ENCODE measurements at regions of chr12 and their contacts with region 1.

Region 1: GRCh38 chr12:124036674-124037109 is 63.7 kb downstream of the ZNF664 start:
- DNase-seq: peak; percentile 21
- ATAC-seq: peak; percentile 54
- H3K4me3 Mint-ChIP-seq: no peak overlapping the region
- H3K27ac Mint-ChIP-seq: no peak overlapping the region
- H3K4me1 Mint-ChIP-seq: no peaks in the 10 kb centered on the region
- H3K27me3 Mint-ChIP-seq: peaks cover 5% of the 10 kb centered on the region
- CTCF ChIP-seq: peak; percentile 96

Region 2: GRCh38 chr12:123801573-123802178 is 235.0 kb before region 1 on chr12:
- CTCF ChIA-PET with region 1: no interaction called
- POLR2A ChIA-PET with region 1: no interaction called
- intact Hi-C with region 1: loop called (anchors 1 kb)
- DNase-seq: no peak
- ATAC-seq: no peak
- H3K4me3 Mint-ChIP-seq: no peak overlapping the region
- H3K27ac Mint-ChIP-seq: no peak overlapping the region
- H3K4me1 Mint-ChIP-seq: no peaks in the 10 kb centered on the region
- H3K27me3 Mint-ChIP-seq: no peaks in the 10 kb centered on the region
- CTCF ChIP-seq: no peak

Region 3: GRCh38 chr12:123934886-123935285 is 101.8 kb before region 1 on chr12:
- CTCF ChIA-PET with region 1: no interaction called
- POLR2A ChIA-PET with region 1: no interaction called
- intact Hi-C with region 1: no loop called
- DNase-seq: no peak
- ATAC-seq: no peak
- H3K4me3 Mint-ChIP-seq: no peak overlapping the region
- H3K27ac Mint-ChIP-seq: no peak overlapping the region
- H3K4me1 Mint-ChIP-seq: peaks cover 24% of the 10 kb centered on the region
- H3K27me3 Mint-ChIP-seq: no peaks in the 10 kb centered on the region
- CTCF ChIP-seq: no peak

Region 4: DNA sequence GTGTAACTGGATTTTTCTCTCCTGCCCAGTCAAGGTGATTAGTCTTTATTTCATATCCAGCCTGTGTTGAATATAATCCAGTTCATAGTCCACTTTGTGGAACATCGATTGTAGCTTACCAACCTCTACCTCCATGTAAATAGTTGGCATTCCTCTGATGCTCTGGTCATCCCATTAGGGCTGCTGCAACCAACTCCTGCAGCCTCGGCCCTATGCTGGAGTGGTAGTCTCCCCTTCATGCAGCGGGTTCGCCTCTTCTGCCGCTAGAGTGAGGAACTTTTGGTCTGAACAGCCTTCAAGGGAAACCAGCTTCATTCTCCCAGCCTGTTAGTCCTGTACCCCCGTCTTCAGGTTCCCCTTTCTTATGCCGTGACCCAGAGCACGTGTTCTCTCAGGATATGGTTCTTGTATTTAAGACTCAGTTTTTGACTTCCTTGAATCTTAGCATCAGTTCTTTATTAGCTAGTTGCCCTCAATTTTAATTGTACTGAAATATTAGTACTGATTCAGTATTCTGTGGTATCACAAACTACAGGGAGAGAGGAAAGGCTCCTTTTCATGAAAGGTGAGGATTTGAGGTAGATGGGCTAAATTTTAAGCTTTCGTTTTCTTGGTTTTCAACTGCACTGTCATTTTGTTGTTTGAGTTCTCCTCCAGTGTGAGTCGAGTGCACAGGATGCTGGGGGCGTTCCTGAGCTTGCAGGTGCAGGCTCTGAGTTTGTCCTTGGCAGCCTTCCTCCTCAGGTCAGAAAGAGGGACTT is 30.4 kb before region 1 on chr12:
- CTCF ChIA-PET with region 1: interaction called, 10 read pairs
- POLR2A ChIA-PET with region 1: no interaction called
- intact Hi-C with region 1: no loop called
- DNase-seq: no peak
- ATAC-seq: peak; percentile 73
- H3K4me3 Mint-ChIP-seq: peak overlapping the region; percentile 46
- H3K27ac Mint-ChIP-seq: peak overlapping the region; percentile 77
- H3K4me1 Mint-ChIP-seq: peaks cover 30% of the 10 kb centered on the region
- H3K27me3 Mint-ChIP-seq: no peaks in the 10 kb centered on the region
- CTCF ChIP-seq: no peak

Region 5: GRCh38 chr12:124680863-124681778 is 644.4 kb after region 1 on chr12:
- CTCF ChIA-PET with region 1: no interaction called
- POLR2A ChIA-PET with region 1: no interaction called
- intact Hi-C with region 1: loop called (anchors 5 kb)
- DNase-seq: peak; percentile 26
- ATAC-seq: peak; percentile 96
- H3K4me3 Mint-ChIP-seq: no peak overlapping the region
- H3K27ac Mint-ChIP-seq: no peak overlapping the region
- H3K4me1 Mint-ChIP-seq: peaks cover 14% of the 10 kb centered on the region
- H3K27me3 Mint-ChIP-seq: peaks cover 6% of the 10 kb centered on the region
- CTCF ChIP-seq: no peak

Region 6: DNA sequence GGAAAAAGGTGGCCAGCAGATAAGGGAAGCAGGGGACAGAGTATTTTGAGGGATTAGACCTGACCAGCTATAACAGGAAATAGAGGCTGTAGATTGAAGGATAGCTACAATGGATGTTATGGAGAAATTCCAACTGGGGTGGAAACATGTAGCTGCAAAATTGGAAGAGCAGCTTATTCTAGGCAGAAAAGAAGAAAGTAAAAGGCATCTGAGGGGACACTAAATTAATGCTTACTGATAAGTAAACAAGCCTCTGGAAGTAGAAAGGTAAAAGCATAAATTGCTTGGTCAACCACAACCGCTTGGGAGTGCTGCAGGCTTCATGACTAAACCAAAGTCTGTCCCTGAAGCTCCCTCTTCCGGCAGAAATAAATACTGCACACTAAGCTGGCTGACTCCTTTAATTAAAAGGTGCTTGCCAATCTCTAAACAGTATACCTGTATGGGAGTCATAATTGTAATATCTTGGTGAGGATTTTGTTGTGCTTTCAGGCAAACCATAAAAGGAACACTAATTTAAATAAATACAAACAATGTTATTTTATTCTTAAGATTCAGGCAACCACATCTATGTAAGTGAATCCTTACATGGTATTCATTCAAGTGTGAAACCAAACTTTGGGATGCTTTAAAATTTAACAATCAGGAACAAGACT is 870.0 kb after region 1 on chr12:
- CTCF ChIA-PET with region 1: interaction called, 15 read pairs
- POLR2A ChIA-PET with region 1: interaction called, 4 read pairs
- intact Hi-C with region 1: no loop called
- DNase-seq: peak; percentile 44
- ATAC-seq: peak; percentile 93
- H3K4me3 Mint-ChIP-seq: no peak overlapping the region
- H3K27ac Mint-ChIP-seq: peak overlapping the region; percentile 59
- H3K4me1 Mint-ChIP-seq: peaks cover 42% of the 10 kb centered on the region
- H3K27me3 Mint-ChIP-seq: no peaks in the 10 kb centered on the region
- CTCF ChIP-seq: peak; percentile 90

Measured in activated B cell treated with CpG ODN at 0.5 μM for 24 hours (primary cell).